Naive thymus-derived CD4-positive, alpha-beta T cell (primary cell): ENCODE measurements at regions of chr9 and their contacts with region 1.

Region 1: GRCh38 chr9:84697509-84698114 is 28.1 kb downstream of the NTRK2 start:
- DNase-seq: peak in 2 of 9 donors; percentile 6 to 57
- ATAC-seq: no peak
- H3K4me3 ChIP-seq: no peak overlapping the region
- H3K4me3 Mint-ChIP-seq: no peak overlapping the region
- H3K27ac ChIP-seq: no peak overlapping the region
- H3K27ac Mint-ChIP-seq: no peak overlapping the region
- H3K4me1 ChIP-seq: no peaks in the 10 kb centered on the region
- H3K4me1 Mint-ChIP-seq: peaks cover 0 to 9% (median 0%) of the 10 kb centered on the region in 7 donors
- H3K27me3 ChIP-seq: no peaks in the 10 kb centered on the region
- H3K27me3 Mint-ChIP-seq: peaks cover 0 to 30% (median 19%) of the 10 kb centered on the region in 5 donors

Region 2: GRCh38 chr9:83583151-83584014 is 1114.2 kb before region 1 on chr9:
- CTCF ChIA-PET with region 1: no interaction called
- POLR2A ChIA-PET with region 1: no interaction called
- intact Hi-C with region 1: no loop called
- DNase-seq: peak in 7 of 9 donors; percentile 6 to 41 (median 24)
- ATAC-seq: peak; percentile 49
- H3K4me3 ChIP-seq: no peak overlapping the region
- H3K4me3 Mint-ChIP-seq: no peak overlapping the region
- H3K27ac ChIP-seq: no peak overlapping the region
- H3K27ac Mint-ChIP-seq: no peak overlapping the region
- H3K4me1 ChIP-seq: no peaks in the 10 kb centered on the region
- H3K4me1 Mint-ChIP-seq: no peaks in the 10 kb centered on the region
- H3K27me3 ChIP-seq: no peaks in the 10 kb centered on the region
- H3K27me3 Mint-ChIP-seq: no peaks in the 10 kb centered on the region

Region 3: GRCh38 chr9:84652577-84653061 is 45.0 kb before region 1 on chr9:
- CTCF ChIA-PET with region 1: no interaction called
- POLR2A ChIA-PET with region 1: no interaction called
- intact Hi-C with region 1: no loop called
- DNase-seq: no peak
- ATAC-seq: no peak
- H3K4me3 ChIP-seq: no peak overlapping the region
- H3K4me3 Mint-ChIP-seq: no peak overlapping the region
- H3K27ac ChIP-seq: no peak overlapping the region
- H3K27ac Mint-ChIP-seq: no peak overlapping the region
- H3K4me1 ChIP-seq: no peaks in the 10 kb centered on the region
- H3K4me1 Mint-ChIP-seq: no peaks in the 10 kb centered on the region
- H3K27me3 ChIP-seq: no peaks in the 10 kb centered on the region
- H3K27me3 Mint-ChIP-seq: peaks cover 5 to 18% (median 11%) of the 10 kb centered on the region in 5 donors

Region 4: GRCh38 chr9:84748112-84748511 is 50.5 kb after region 1 on chr9:
- CTCF ChIA-PET with region 1: no interaction called
- POLR2A ChIA-PET with region 1: no interaction called
- intact Hi-C with region 1: no loop called
- DNase-seq: no peak
- ATAC-seq: no peak
- H3K4me3 ChIP-seq: no peak overlapping the region
- H3K4me3 Mint-ChIP-seq: no peak overlapping the region
- H3K27ac ChIP-seq: no peak overlapping the region
- H3K27ac Mint-ChIP-seq: no peak overlapping the region
- H3K4me1 ChIP-seq: no peaks in the 10 kb centered on the region
- H3K4me1 Mint-ChIP-seq: peaks cover 0 to 18% (median 0%) of the 10 kb centered on the region in 7 donors
- H3K27me3 ChIP-seq: no peaks in the 10 kb centered on the region
- H3K27me3 Mint-ChIP-seq: peaks cover 0 to 8% (median 0%) of the 10 kb centered on the region in 5 donors

Region 5: GRCh38 chr9:84759300-84759750 is 61.7 kb after region 1 on chr9:
- CTCF ChIA-PET with region 1: no interaction called
- POLR2A ChIA-PET with region 1: no interaction called
- intact Hi-C with region 1: loop called in 1 of 2 experiments (anchors 5 kb)
- DNase-seq: peak in 1 of 9 donors; percentile 51
- ATAC-seq: no peak
- H3K4me3 ChIP-seq: no peak overlapping the region
- H3K4me3 Mint-ChIP-seq: peak overlapping the region in 1 of 10 donors; percentile 75
- H3K27ac ChIP-seq: no peak overlapping the region
- H3K27ac Mint-ChIP-seq: peak overlapping the region in 1 of 9 donors; percentile 87
- H3K4me1 ChIP-seq: no peaks in the 10 kb centered on the region
- H3K4me1 Mint-ChIP-seq: peaks cover 0 to 43% (median 0%) of the 10 kb centered on the region in 7 donors
- H3K27me3 ChIP-seq: no peaks in the 10 kb centered on the region
- H3K27me3 Mint-ChIP-seq: peaks cover 0 to 24% (median 16%) of the 10 kb centered on the region in 5 donors

Region 6: DNA sequence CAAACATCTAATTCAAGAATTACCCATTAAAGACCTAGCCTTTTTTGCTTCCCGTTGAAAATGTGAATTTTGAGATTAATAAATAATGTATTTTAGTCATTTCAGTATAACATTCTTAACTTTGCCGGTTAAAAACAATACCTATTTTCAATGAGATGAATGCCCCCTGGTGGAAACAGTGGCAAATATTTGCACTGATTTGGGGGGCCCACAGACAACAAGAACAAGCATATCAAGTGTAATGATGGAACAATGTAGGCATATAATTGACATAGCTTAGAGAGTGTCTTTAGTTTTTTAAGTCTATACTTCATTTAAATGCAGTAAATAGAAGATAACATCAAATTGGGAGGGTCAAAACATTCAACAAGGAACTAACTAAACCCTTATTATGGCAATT is 83.8 kb after region 1 on chr9:
- CTCF ChIA-PET with region 1: no interaction called
- POLR2A ChIA-PET with region 1: no interaction called
- intact Hi-C with region 1: loop called in 1 of 2 experiments (anchors 1 kb)
- DNase-seq: no peak
- ATAC-seq: no peak
- H3K4me3 ChIP-seq: no peak overlapping the region
- H3K4me3 Mint-ChIP-seq: no peak overlapping the region
- H3K27ac ChIP-seq: no peak overlapping the region
- H3K27ac Mint-ChIP-seq: no peak overlapping the region
- H3K4me1 ChIP-seq: no peaks in the 10 kb centered on the region
- H3K4me1 Mint-ChIP-seq: no peaks in the 10 kb centered on the region
- H3K27me3 ChIP-seq: no peaks in the 10 kb centered on the region
- H3K27me3 Mint-ChIP-seq: peaks cover 2 to 34% (median 21%) of the 10 kb centered on the region in 5 donors

Region 7: DNA sequence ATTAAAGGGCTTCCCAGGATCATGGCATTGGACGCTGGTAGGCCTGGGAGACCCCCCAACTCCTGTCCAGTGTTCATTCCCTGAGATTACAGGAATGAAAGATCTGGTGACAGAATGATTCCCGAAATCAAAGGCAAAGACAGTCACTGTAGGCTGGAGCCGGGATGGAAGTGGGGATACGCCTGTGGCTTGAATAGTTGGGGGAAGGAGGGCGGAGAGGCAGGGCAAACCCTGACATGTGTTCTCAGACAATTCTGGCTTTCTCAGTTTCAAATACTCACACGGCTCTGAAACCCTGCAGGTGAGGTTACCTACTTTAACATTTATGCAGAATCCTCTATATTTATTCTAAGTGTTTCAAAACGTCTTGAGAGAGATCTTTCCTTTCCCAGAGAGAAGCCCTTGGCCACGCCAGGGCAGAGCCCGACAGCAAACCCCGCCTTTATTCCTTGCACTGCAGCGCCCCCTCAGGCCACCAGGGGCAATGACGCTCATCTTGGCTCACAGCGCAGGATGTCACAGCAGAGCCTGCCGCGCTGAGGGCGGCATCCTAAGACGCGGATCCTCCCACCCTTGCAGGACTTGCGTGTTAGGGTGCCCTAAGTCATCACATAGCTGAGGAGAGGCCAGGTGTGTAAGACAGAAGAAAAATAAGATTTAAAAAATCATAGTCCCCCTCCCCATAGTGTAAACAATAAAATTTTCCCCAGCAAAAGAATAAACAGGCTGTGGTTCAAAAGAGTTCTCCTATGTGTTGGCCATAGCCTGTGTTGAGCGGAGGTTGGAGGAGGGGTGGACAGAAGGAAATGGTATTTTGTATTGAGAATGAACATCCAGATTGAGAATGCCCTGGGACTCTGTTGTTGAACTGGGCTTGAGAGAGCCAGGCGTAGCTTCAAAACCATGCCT is 256.4 kb after region 1 on chr9:
- CTCF ChIA-PET with region 1: no interaction called
- POLR2A ChIA-PET with region 1: no interaction called
- intact Hi-C with region 1: loop called in 1 of 2 experiments (anchors 1 kb)
- DNase-seq: peak in 3 of 9 donors; percentile 1 to 63 (median 14)
- ATAC-seq: peak; percentile 66
- H3K4me3 ChIP-seq: no peak overlapping the region
- H3K4me3 Mint-ChIP-seq: no peak overlapping the region
- H3K27ac ChIP-seq: no peak overlapping the region
- H3K27ac Mint-ChIP-seq: no peak overlapping the region
- H3K4me1 ChIP-seq: no peaks in the 10 kb centered on the region
- H3K4me1 Mint-ChIP-seq: peaks cover 0 to 4% (median 0%) of the 10 kb centered on the region in 7 donors
- H3K27me3 ChIP-seq: no peaks in the 10 kb centered on the region
- H3K27me3 Mint-ChIP-seq: peaks cover 6 to 41% (median 14%) of the 10 kb centered on the region in 5 donors